ENCODE measurements at regions of chr7 and their contacts with region 1.

Region 1: GRCh38 chr7:91784463-91784862 is 96.0 kb downstream of the MTERF1 start:
- DNase-seq: peak in 1 of 2 experiments; percentile 65
- H3K4me3 ChIP-seq: no peak overlapping the region
- H3K27ac ChIP-seq: no peak overlapping the region
- H3K4me1 ChIP-seq: no peaks in the 10 kb centered on the region
- H3K27me3 ChIP-seq: no peaks in the 10 kb centered on the region
- CTCF ChIP-seq: peak; percentile 70

Region 2: DNA sequence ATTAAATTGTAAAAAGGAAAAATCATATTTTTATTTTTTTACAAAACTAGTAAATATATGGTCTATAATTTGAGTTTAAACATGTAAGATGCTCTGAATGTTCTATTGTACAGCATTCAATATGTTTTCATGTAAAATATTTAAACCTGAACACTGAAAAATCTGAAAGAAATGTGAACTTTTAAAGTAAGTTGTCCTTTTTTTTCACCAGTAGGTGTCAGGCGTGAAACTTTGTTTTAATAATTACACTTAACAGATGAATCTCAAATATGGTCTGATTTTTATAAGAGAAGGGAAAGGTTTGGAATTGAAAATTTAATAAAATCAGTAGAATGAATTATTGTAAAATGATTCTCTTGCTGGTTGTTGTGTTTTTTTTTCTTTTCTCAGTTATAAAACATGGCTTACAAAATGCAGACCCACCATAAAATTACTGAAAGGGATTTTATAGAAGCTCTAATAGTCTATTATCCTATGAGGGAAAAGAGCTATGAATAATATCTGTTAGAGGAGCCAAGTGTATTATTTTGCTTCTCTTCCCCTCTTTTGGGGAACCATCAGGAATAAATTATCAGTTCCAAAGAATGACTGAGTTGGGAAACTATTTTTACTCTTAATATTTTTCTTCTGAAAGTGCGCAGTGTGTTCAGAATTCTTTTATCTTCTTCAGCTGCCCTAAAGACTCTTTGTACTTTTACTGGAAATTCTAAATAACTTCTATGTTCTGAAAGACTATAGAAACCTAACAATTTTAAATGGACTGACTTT is 738.0 kb before region 1 on chr7:
- CTCF ChIA-PET with region 1: no interaction called
- POLR2A ChIA-PET with region 1: no interaction called
- intact Hi-C with region 1: loop called (anchors 10 kb)
- DNase-seq: no peak
- H3K4me3 ChIP-seq: no peak overlapping the region
- H3K27ac ChIP-seq: no peak overlapping the region
- H3K4me1 ChIP-seq: no peaks in the 10 kb centered on the region
- H3K27me3 ChIP-seq: no peaks in the 10 kb centered on the region
- CTCF ChIP-seq: peak; percentile 58

Region 3: GRCh38 chr7:91089382-91089963 is 695.0 kb before region 1 on chr7:
- CTCF ChIA-PET with region 1: no interaction called
- POLR2A ChIA-PET with region 1: no interaction called
- intact Hi-C with region 1: loop called (anchors 1 kb)
- DNase-seq: peak in 1 of 2 experiments; percentile 19
- H3K4me3 ChIP-seq: no peak overlapping the region
- H3K27ac ChIP-seq: no peak overlapping the region
- H3K4me1 ChIP-seq: no peaks in the 10 kb centered on the region
- H3K27me3 ChIP-seq: no peaks in the 10 kb centered on the region
- CTCF ChIP-seq: peak; percentile 84

Region 4: DNA sequence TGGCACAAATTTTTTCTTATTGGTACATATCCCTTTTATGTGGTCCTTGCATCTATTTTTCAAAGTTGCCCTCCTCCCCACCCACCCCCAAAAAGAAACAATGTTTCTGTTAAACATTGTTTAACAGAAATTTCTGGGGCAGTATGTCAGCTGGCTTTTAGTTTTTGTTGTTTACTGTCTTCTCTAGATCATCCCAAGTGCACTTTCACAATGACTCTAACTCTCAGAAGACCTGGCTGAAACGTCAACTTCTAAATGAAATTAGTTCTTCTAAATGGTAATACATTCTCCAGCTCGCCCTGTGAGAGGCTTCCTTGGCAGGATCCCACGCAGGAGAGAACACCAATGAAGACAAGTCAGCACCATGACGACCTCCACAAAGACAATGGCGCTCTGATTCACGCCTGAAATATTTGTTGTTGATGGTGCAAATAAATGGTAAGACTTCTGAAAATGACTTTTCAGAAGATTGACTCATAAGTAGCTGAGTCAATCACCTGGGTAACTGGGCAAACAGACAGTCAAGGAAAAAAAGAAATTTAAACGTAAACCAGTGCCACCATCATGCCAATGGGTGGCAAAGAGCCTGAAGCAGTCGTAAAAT is 226.6 kb before region 1 on chr7:
- CTCF ChIA-PET with region 1: no interaction called
- POLR2A ChIA-PET with region 1: no interaction called
- intact Hi-C with region 1: loop called (anchors 10 kb)
- DNase-seq: peak; percentile 83 to 86
- H3K4me3 ChIP-seq: no peak overlapping the region
- H3K27ac ChIP-seq: peak overlapping the region; percentile 54
- H3K4me1 ChIP-seq: peaks cover 13% of the 10 kb centered on the region
- H3K27me3 ChIP-seq: no peaks in the 10 kb centered on the region
- CTCF ChIP-seq: no peak

Region 5: GRCh38 chr7:92058040-92058439 is 273.6 kb after region 1 on chr7:
- CTCF ChIA-PET with region 1: no interaction called
- POLR2A ChIA-PET with region 1: no interaction called
- intact Hi-C with region 1: no loop called
- DNase-seq: no peak
- H3K4me3 ChIP-seq: no peak overlapping the region
- H3K27ac ChIP-seq: no peak overlapping the region
- H3K4me1 ChIP-seq: peaks cover 22% of the 10 kb centered on the region; the same call in 1 of the 2 replicates
- H3K27me3 ChIP-seq: no peaks in the 10 kb centered on the region
- CTCF ChIP-seq: no peak

Region 6: GRCh38 chr7:92121681-92122080 is 337.2 kb after region 1 on chr7:
- CTCF ChIA-PET with region 1: no interaction called
- POLR2A ChIA-PET with region 1: no interaction called
- intact Hi-C with region 1: no loop called
- DNase-seq: no peak
- H3K4me3 ChIP-seq: no peak overlapping the region
- H3K27ac ChIP-seq: no peak overlapping the region
- H3K4me1 ChIP-seq: no peaks in the 10 kb centered on the region
- H3K27me3 ChIP-seq: no peaks in the 10 kb centered on the region
- CTCF ChIP-seq: no peak